Endothelial cell of umbilical vein (primary cell): ENCODE measurements at regions of chr11 and their contacts with region 1.

Region 1: GRCh38 chr11:130213143-130213978 is 53.8 kb downstream of the ST14 start:
- DNase-seq: peak; percentile 40
- H3K4me3 ChIP-seq: no peak overlapping the region
- H3K27ac ChIP-seq: no peak overlapping the region
- H3K4me1 ChIP-seq: no peaks in the 10 kb centered on the region
- H3K27me3 ChIP-seq: peaks cover 3 to 12% of the 10 kb centered on the region in 2 experiments
- CTCF ChIP-seq: peak; percentile 68 to 95
- POLR2A ChIP-seq: no peak

Region 2: DNA sequence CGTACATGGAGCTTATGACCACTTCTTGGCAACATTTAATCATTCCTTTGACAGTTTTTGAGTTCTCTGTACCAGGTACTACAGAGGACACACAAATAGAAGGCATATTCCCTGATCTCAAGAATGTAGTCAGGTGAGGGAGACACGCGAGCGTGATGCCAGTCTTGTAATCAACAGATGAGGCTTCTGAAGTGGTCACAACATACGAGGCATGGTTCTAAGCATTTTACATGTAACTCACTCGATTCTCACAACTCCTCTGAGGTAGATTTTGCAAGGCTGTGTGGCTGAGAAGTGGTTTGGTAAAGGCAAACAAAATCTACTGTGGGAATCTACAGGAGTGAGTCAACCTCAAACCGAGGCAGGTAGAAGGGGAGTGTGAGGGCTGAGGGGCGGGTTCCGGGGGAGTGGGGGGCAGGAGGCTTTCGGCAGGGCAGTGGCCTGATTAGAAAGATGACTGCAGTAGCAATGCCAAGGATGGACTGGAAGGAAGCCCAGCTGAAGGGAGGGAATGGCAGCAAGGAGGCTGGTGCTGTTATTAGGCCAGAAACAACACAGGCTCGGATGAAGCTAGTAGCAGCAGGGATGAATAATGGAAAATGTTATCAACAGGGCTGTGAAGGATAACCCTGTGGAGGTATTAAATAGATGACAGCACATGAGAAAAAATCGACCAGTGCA is 10.1 kb after region 1 on chr11:
- CTCF ChIA-PET with region 1: interaction called, 26 read pairs
- POLR2A ChIA-PET with region 1: no interaction called
- dilution Hi-C with region 1: no loop called
- intact Hi-C with region 1: no loop called
- DNase-seq: no peak
- H3K4me3 ChIP-seq: no peak overlapping the region
- H3K27ac ChIP-seq: no peak overlapping the region
- H3K4me1 ChIP-seq: no peaks in the 10 kb centered on the region
- H3K27me3 ChIP-seq: no peaks in the 10 kb centered on the region
- CTCF ChIP-seq: no peak
- POLR2A ChIP-seq: no peak

Region 3: DNA sequence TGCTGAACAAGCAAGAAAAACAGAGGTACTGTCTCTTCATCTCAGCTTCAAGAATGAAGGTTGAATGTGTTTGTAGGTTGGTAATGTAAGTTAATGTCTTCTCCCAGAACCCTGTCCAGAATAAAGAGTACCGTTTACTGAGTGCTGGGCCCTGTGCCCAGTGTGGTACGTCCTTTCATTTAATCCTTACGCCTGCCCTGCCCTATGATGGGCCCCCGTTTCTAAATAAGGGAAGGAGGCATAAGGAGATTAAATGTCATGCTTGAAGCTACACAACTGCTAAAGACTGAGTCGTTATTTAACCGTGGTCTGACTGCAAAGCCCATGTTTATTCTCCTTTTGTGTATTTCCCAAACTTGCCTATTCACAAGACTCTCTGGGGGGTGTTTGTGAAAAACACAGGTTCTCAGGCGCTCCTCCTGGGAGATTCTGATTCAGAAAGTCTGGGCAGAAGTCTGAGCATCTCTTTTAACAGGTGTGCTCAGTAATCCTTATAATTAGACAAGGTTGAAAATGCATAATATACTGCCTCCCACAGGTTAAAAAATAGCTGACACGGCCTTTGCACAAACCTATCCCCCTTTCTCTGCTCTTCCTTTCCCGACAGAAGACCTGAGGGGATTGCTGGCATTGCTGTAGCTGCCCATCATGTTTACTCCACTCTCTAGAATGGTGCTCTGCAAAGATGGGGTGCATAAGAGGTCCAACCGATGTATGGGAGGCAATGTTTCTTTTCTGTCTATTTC is 157.7 kb after region 1 on chr11:
- CTCF ChIA-PET with region 1: interaction called, 8 read pairs
- POLR2A ChIA-PET with region 1: no interaction called
- dilution Hi-C with region 1: no loop called
- intact Hi-C with region 1: loop called (anchors 1 kb)
- DNase-seq: no peak
- H3K4me3 ChIP-seq: no peak overlapping the region
- H3K27ac ChIP-seq: no peak overlapping the region
- H3K4me1 ChIP-seq: no peaks in the 10 kb centered on the region
- H3K27me3 ChIP-seq: no peaks in the 10 kb centered on the region
- CTCF ChIP-seq: no peak
- POLR2A ChIP-seq: no peak

Region 4: DNA sequence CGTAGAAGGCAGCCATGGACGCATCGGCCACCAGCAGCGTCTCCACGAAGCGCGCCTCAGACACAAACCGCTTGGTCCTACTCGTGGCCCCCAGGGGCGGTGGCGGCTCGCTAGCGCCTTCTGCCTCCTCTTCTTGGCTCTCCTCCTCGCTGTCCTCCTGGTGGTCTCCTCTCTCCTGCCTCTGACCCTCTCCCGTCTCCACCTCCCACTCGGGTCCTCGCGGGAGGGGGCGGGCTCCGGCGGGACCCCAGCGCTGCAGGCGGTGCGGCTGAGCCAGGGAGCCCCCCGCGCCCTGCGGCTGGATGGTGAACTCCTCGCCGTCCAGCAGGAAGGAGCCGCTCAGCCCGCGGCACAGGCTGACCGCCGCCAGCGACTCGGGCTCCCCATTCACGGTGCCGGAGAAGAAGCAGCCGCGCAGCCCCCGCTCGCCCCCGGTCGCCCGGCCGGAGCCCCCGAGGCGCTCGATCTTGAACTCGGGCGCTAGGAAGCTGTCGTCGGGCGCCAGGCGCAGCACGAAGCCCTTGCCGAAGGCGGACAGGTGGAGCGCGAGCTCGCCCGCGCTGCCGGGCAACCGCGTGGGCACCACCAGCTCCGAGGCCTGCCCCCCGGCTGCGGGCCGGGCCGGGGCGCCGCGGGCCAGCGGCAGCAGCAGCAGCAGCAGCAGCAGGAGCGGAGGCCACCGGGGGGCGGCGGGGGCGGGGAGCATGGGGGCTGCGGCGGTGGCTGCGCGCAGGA is 214.4 kb after region 1 on chr11:
- CTCF ChIA-PET with region 1: interaction called, 28 read pairs
- POLR2A ChIA-PET with region 1: no interaction called
- dilution Hi-C with region 1: no loop called
- intact Hi-C with region 1: loop called (anchors 1 kb)
- DNase-seq: no peak
- H3K4me3 ChIP-seq: peak overlapping the region in 1 of 3 experiments; percentile 8
- H3K27ac ChIP-seq: no peak overlapping the region
- H3K4me1 ChIP-seq: no peaks in the 10 kb centered on the region
- H3K27me3 ChIP-seq: peaks cover 46 to 48% of the 10 kb centered on the region in 2 experiments
- CTCF ChIP-seq: peak in 1 of 2 donors; percentile 4
- POLR2A ChIP-seq: no peak